ENCODE measurements at regions of chr12 and their contacts with region 1.

Region 1: GRCh38 chr12:110100315-110100970 is 23.7 kb upstream of the IFT81 start:
- DNase-seq: no peak
- H3K4me3 ChIP-seq: no peak overlapping the region
- H3K27ac ChIP-seq: peak overlapping the region; percentile 9
- H3K4me1 ChIP-seq: peaks cover 6% of the 10 kb centered on the region
- H3K27me3 ChIP-seq: no peaks in the 10 kb centered on the region
- CTCF ChIP-seq: peak; percentile 85 to 96 (median 95)
- POLR2A ChIP-seq: no peak

Region 2: DNA sequence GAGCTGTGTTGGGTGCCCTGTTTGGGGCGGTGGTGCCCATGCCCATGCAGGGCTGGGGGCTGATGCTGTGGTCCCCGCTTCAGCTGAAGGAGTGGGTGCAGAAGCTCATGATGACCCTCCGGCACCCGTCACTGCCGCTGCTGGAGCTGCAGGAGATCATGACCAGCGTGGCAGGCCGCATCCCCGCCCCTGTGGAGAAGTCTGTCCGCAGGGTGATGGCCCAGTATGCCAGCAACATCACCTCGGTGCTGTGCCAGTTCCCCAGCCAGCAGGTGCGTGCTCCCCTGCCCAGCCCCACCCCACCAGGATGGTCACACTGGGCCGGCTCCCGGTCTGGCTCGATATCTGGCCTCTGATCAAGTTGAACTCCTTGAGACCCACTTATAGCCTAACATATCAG is 891.4 kb before region 1 on chr12:
- intact Hi-C with region 1: no loop called
- DNase-seq: no peak
- H3K4me3 ChIP-seq: no peak overlapping the region
- H3K27ac ChIP-seq: no peak overlapping the region
- H3K4me1 ChIP-seq: no peaks in the 10 kb centered on the region
- H3K27me3 ChIP-seq: no peaks in the 10 kb centered on the region
- CTCF ChIP-seq: no peak
- POLR2A ChIP-seq: no peak

Region 3: DNA sequence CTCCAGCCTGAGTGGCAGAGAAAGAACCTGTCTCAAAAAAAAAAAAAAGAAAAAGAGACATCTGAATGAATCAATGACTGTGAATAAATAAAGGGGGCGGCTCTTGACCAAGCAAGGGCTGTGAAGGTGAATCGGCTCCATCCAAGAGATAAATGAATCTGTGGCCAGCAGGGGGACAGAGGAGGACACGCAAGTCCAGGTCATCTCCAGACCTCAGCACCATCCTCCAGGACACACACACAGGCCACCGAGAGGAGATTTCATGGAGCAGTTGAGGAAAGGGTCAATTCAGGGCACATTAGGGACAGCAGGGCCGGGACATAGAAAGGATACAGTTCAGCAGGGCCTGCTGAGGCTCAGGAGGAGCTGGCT is 288.8 kb before region 1 on chr12:
- intact Hi-C with region 1: no loop called
- DNase-seq: no peak
- H3K4me3 ChIP-seq: no peak overlapping the region
- H3K27ac ChIP-seq: no peak overlapping the region
- H3K4me1 ChIP-seq: no peaks in the 10 kb centered on the region
- H3K27me3 ChIP-seq: no peaks in the 10 kb centered on the region
- CTCF ChIP-seq: no peak
- POLR2A ChIP-seq: no peak

Region 4: GRCh38 chr12:110431957-110432587 is 331.6 kb after region 1 on chr12:
- intact Hi-C with region 1: loop called (anchors 5 kb)
- DNase-seq: no peak
- H3K4me3 ChIP-seq: peak overlapping the region; percentile 38 to 49
- H3K27ac ChIP-seq: peak overlapping the region; percentile 58
- H3K4me1 ChIP-seq: no peaks in the 10 kb centered on the region
- H3K27me3 ChIP-seq: no peaks in the 10 kb centered on the region
- CTCF ChIP-seq: no peak
- POLR2A ChIP-seq: no peak

Measured in vagina (tissue), 2 donors.